Activated naive CD4-positive, alpha-beta T cell treated with anti-CD3 and anti-CD28 coated beads for 36 hours (primary cell): ENCODE measurements at regions of chr3 and their contacts with region 1.

Region 1: GRCh38 chr3:179100652-179101051 is 29.0 kb upstream of the ZMAT3 start:
- DNase-seq: no peak
- H3K4me3 Mint-ChIP-seq: no peak overlapping the region
- H3K27ac Mint-ChIP-seq: no peak overlapping the region
- H3K4me1 Mint-ChIP-seq: peaks cover 1% of the 10 kb centered on the region
- H3K27me3 Mint-ChIP-seq: no peaks in the 10 kb centered on the region

Region 2: GRCh38 chr3:178436773-178437172 is 663.9 kb before region 1 on chr3:
- CTCF ChIA-PET with region 1: no interaction called
- intact Hi-C with region 1: loop called (anchors 10 kb)
- DNase-seq: no peak
- H3K4me3 Mint-ChIP-seq: no peak overlapping the region
- H3K27ac Mint-ChIP-seq: no peak overlapping the region
- H3K4me1 Mint-ChIP-seq: no peaks in the 10 kb centered on the region
- H3K27me3 Mint-ChIP-seq: no peaks in the 10 kb centered on the region